Caco-2 (cell line): ENCODE measurements at regions of chr11 and their contacts with region 1.

Region 1: GRCh38 chr11:94834911-94835593 is 66.9 kb downstream of the AMOTL1 start:
- DNase-seq: no peak
- H3K4me3 ChIP-seq: no peak overlapping the region
- H3K4me3 Mint-ChIP-seq: no peak overlapping the region
- H3K27ac Mint-ChIP-seq: peak overlapping the region; percentile 87
- H3K4me1 ChIP-seq: peaks cover 63% of the 10 kb centered on the region
- H3K4me1 Mint-ChIP-seq: peaks cover 38% of the 10 kb centered on the region
- H3K27me3 ChIP-seq: no peaks in the 10 kb centered on the region
- H3K27me3 Mint-ChIP-seq: no peaks in the 10 kb centered on the region
- CTCF ChIP-seq: no peak

Region 2: GRCh38 chr11:94543695-94544645 is 291.1 kb before region 1 on chr11 and contains the start of gene FUT4:
- CTCF ChIA-PET with region 1: no interaction called
- POLR2A ChIA-PET with region 1: no interaction called
- intact Hi-C with region 1: loop called (anchors 2 kb)
- DNase-seq: peak; percentile 96 to 98
- H3K4me3 ChIP-seq: peak within 1 kb of the TSS; percentile 71
- H3K4me3 Mint-ChIP-seq: peak within 1 kb of the TSS; percentile 86
- H3K27ac Mint-ChIP-seq: peak within 1 kb of the TSS; percentile 90
- H3K4me1 ChIP-seq: peaks cover 29% of the 10 kb centered on the region
- H3K4me1 Mint-ChIP-seq: peaks cover 34% of the 10 kb centered on the region
- H3K27me3 ChIP-seq: no peaks in the 10 kb centered on the region
- H3K27me3 Mint-ChIP-seq: no peaks in the 10 kb centered on the region
- CTCF ChIP-seq: no peak
- total RNA-seq, gene FUT4: 24.5 and 25.0 TPM in 2 replicates

Region 3: DNA sequence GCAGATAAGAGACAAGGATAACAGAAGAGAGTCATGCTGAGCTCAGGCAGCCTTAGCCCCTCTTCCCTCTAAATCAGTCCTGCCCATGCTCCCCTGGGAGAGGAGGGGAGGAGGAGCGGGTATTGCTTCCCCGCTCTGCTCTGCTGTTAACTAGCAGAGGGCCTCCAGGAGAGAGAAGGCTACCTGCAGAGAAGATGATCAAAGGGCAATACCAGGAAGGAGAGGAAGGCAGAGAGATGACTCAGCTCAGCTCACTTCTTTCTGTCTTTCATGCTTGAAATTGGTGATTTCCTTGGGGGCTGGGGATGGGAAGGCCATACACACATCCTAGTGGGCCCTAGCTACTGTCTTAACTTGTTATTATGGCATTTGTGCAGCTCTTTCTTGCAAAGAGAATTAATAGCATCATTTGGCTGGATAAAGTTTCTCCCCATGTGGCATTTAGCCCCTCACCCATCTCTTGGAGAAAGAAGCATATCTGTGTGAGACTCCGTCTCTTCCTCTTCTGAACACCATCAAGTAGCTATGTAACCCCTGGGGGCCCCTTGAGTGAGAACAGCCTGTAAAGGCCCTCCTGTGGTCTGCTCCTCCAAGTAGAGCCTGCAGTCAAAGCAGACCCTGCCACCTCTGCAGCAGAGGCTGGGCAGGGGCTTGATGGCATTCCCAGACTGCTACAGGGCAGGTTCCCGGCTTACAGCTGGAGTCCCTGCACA is 100.3 kb before region 1 on chr11:
- CTCF ChIA-PET with region 1: interaction called, 3 read pairs
- POLR2A ChIA-PET with region 1: no interaction called
- intact Hi-C with region 1: loop called (anchors 1 kb)
- DNase-seq: no peak
- H3K4me3 ChIP-seq: no peak overlapping the region
- H3K4me3 Mint-ChIP-seq: no peak overlapping the region
- H3K27ac Mint-ChIP-seq: peak overlapping the region; percentile 7
- H3K4me1 ChIP-seq: peaks cover 55% of the 10 kb centered on the region
- H3K4me1 Mint-ChIP-seq: peaks cover 11% of the 10 kb centered on the region
- H3K27me3 ChIP-seq: no peaks in the 10 kb centered on the region
- H3K27me3 Mint-ChIP-seq: no peaks in the 10 kb centered on the region
- CTCF ChIP-seq: no peak

Region 4: DNA sequence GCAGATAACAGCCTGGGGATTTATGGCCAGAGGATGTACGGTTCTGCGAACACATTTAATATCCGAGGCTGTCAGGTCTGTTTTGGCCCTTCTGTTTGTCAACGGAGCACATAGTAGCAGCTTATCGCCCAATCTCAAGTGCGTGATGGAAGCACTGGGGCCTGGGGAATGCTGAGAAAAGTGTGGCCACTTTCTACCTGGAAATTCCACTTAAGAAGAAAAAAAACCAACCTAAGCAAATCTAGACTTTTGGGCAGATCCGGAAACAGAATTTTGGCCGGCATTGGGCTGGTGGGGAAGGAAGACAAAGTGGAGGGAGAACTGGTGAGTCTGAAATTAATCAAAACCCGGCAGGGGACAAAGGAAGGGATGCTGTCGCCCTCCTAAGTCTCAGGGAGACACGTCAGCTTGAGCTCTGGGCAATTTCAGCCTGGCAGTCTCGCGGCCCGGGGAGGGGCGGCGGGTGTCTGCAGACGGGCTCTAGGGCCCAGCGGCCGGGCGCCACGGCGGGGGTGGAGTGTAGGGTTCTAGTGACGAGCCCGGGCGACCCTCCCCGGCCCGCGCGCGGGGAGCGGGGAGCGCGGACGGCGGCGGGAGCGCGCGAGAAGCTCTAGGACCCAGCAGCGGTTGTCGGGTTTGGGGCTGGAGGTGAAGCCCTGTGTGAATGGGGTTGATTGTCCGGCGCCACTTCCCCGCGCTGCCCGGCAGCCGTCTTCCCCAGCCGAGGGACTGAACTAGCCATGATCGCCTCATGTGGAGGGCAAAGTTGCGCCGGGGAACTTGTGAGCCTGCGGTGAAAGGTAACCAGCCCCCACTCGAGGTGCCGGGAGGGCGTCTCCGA is 67.1 kb before region 1 on chr11 and contains the start of gene AMOTL1:
- CTCF ChIA-PET with region 1: interaction called, 6 read pairs
- POLR2A ChIA-PET with region 1: no interaction called
- intact Hi-C with region 1: loop called (anchors 1 kb)
- DNase-seq: peak; percentile 95 to 96
- H3K4me3 ChIP-seq: peak within 1 kb of the TSS; percentile 75
- H3K4me3 Mint-ChIP-seq: no peak within 1 kb of the TSS
- H3K27ac Mint-ChIP-seq: peak within 1 kb of the TSS; percentile 84
- H3K4me1 ChIP-seq: peaks cover 38% of the 10 kb centered on the region
- H3K4me1 Mint-ChIP-seq: peaks cover 15% of the 10 kb centered on the region
- H3K27me3 ChIP-seq: no peaks in the 10 kb centered on the region
- H3K27me3 Mint-ChIP-seq: no peaks in the 10 kb centered on the region
- CTCF ChIP-seq: no peak
- total RNA-seq, gene AMOTL1: 60.8 and 64.6 TPM in 2 replicates

Region 5: GRCh38 chr11:94815705-94816344 is 19.2 kb before region 1 on chr11:
- CTCF ChIA-PET with region 1: no interaction called
- POLR2A ChIA-PET with region 1: no interaction called
- intact Hi-C with region 1: loop called (anchors 2 kb)
- DNase-seq: peak; percentile 62 to 63
- H3K4me3 ChIP-seq: no peak overlapping the region
- H3K4me3 Mint-ChIP-seq: no peak overlapping the region
- H3K27ac Mint-ChIP-seq: no peak overlapping the region
- H3K4me1 ChIP-seq: no peaks in the 10 kb centered on the region; the same call in 1 of the 2 replicates
- H3K4me1 Mint-ChIP-seq: peaks cover 9% of the 10 kb centered on the region
- H3K27me3 ChIP-seq: no peaks in the 10 kb centered on the region
- H3K27me3 Mint-ChIP-seq: no peaks in the 10 kb centered on the region
- CTCF ChIP-seq: no peak

Region 6: DNA sequence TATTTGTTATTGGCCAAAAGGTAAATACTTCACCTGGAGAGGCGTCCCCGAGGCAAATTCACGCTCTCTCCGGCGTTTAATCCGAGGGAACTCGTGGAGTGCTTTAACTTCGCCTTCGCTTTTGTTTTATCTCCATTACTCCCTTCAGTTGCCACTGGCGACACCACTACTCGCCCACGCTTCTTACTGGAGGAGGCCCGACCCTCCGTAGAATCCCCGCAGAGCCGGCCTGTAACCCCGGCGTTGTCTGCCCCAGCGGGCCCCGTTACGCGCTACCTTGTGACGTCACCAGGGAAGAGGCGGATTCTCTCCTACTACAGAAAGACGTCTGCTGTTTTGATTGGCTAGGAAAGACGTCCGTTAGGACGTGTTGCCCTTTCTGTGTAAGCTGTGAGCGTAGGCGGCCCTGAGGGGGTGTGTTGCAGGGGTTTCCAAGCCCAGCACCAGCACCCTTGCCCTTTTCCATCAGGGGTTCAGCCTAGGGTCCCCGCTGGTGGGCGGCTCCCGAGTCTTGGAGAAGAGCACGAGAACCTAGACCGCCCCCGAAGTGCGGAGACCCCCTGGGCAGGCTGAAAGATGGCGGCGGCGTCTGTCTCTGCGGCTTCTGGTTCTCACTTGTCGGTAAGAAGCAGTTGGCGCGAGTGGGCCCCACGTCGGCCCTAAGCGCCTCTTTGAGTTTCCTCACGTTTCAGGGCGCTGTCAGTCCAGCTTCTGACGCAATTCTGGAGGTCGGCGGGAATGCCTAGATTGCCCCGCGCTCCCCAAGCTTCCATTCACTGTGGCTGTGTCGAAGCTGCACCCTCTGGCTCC is 955.3 kb after region 1 on chr11 and contains the start of gene CEP57:
- CTCF ChIA-PET with region 1: no interaction called
- POLR2A ChIA-PET with region 1: no interaction called
- intact Hi-C with region 1: loop called (anchors 2 kb)
- DNase-seq: peak; percentile 99
- H3K4me3 ChIP-seq: peak within 1 kb of the TSS; percentile 72
- H3K4me3 Mint-ChIP-seq: peak within 1 kb of the TSS; percentile 72
- H3K27ac Mint-ChIP-seq: peak within 1 kb of the TSS; percentile 100
- H3K4me1 ChIP-seq: peaks cover 19% of the 10 kb centered on the region; the same call in 1 of the 2 replicates
- H3K4me1 Mint-ChIP-seq: peaks cover 23% of the 10 kb centered on the region
- H3K27me3 ChIP-seq: no peaks in the 10 kb centered on the region
- H3K27me3 Mint-ChIP-seq: no peaks in the 10 kb centered on the region
- CTCF ChIP-seq: no peak
- total RNA-seq, gene CEP57: 117 and 125 TPM in 2 replicates